Esophagus squamous epithelium (tissue), 5 donors: ENCODE measurements at regions of chr17 and their contacts with region 1.

Region 1: GRCh38 chr17:30084788-30085187 is 31.8 kb upstream of the NSRP1 start:
- DNase-seq: no peak
- H3K4me3 ChIP-seq: no peak overlapping the region
- H3K27ac ChIP-seq: no peak overlapping the region
- H3K4me1 ChIP-seq: no peaks in the 10 kb centered on the region
- H3K27me3 ChIP-seq: peaks cover 0 to 24% (median 2%) of the 10 kb centered on the region in 4 donors
- CTCF ChIP-seq: no peak
- POLR2A ChIP-seq: no peak

Region 2: DNA sequence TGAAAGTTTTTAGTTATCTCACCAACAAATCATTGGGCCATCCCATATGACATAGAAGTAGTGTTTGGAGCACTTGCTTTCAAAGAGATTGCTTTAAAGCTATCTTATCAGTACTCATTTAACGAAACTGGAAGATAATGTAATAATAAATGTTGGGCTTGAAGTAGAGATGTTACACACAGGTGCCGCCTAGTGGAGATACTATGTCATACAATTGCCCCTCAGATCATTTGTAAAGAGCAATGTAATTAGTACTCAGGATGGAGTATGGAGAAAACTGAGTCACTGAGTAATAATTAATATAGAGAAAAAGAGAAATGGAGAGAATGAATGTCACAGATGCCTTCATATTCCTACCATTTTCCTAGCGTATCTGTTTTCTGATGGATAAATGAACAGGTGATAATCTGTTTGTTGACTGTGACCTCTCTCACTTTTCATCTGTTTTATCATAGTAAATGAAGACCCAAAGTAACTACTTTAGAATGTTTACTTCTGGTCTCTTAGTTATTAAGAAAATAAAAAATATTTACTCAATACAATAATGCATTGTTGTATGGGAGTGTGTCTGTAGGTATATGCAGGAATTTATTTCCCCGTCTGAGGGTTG is 63.0 kb before region 1 on chr17:
- intact Hi-C with region 1: loop called (anchors 10 kb)
- DNase-seq: no peak
- H3K4me3 ChIP-seq: no peak overlapping the region
- H3K27ac ChIP-seq: no peak overlapping the region
- H3K4me1 ChIP-seq: no peaks in the 10 kb centered on the region
- H3K27me3 ChIP-seq: no peaks in the 10 kb centered on the region
- CTCF ChIP-seq: peak; percentile 51 to 77 (median 72)
- POLR2A ChIP-seq: no peak